Ascending aorta (tissue), 2 donors: ENCODE measurements at regions of chr18 and their contacts with region 1.

Region 1: DNA sequence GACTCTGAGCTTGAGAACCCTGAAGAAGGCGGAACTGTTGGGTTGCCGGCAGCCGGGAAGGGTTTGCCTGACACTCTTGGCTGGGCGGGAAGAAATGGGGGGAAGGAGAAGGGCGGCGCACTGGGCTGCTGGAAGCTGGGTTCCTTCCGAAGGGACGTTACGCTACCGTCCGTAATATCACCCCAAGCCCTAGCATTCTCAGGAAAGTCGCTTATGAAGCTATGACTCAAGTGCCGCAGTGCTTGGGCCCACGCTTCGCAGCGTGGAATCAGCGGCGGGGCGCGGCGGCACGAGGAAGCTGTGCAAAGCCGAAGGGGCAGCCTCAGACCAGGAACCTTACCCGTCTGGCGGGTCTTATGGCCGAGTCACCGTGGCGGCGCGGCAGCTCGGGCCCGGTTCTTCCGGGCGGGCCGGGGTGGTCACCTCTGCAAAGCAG is 50.2 kb upstream of the SIGLEC15 start:
- DNase-seq: peak in 1 of 2 donors; percentile 84
- H3K4me3 ChIP-seq: peak overlapping the region; percentile 66 to 69
- H3K27ac ChIP-seq: peak overlapping the region; percentile 77 to 84
- H3K4me1 ChIP-seq: peaks cover 0 to 10% of the 10 kb centered on the region in 2 donors
- H3K27me3 ChIP-seq: no peaks in the 10 kb centered on the region
- CTCF ChIP-seq: no peak

Region 2: GRCh38 chr18:45722899-45723298 is 52.4 kb before region 1 on chr18:
- intact Hi-C with region 1: loop called (anchors 2 kb)
- DNase-seq: peak; percentile 26 to 87
- H3K4me3 ChIP-seq: no peak overlapping the region
- H3K27ac ChIP-seq: no peak overlapping the region
- H3K4me1 ChIP-seq: peaks cover 3 to 4% of the 10 kb centered on the region in 2 donors
- H3K27me3 ChIP-seq: no peaks in the 10 kb centered on the region
- CTCF ChIP-seq: peak; percentile 45 to 76 (median 64)

Region 3: GRCh38 chr18:45738658-45739057 is 36.6 kb before region 1 on chr18:
- intact Hi-C with region 1: no loop called
- DNase-seq: no peak
- H3K4me3 ChIP-seq: no peak overlapping the region
- H3K27ac ChIP-seq: no peak overlapping the region
- H3K4me1 ChIP-seq: peaks cover 0 to 2% of the 10 kb centered on the region in 2 donors
- H3K27me3 ChIP-seq: no peaks in the 10 kb centered on the region
- CTCF ChIP-seq: no peak

Region 4: DNA sequence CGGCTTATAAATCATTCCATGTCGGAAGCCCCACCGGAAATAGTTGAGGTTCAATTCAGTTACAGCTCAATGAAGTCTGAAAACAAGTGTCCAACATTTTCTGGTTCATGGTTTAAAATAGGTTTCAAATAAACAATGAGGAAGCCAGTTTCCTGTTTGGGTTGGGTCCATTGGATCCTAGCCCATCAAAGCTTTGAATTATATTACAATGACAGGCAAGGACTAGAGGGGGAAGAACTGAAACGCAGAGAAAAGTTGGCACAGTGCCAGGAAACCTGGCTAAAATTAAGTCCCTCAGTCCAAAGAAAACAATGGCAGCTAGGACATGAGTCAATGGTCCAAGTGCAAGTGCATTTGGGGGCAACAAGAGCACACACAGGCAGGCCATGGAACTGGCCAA is 19.3 kb before region 1 on chr18:
- intact Hi-C with region 1: loop called (anchors 1 kb)
- DNase-seq: peak; percentile 44 to 94
- H3K4me3 ChIP-seq: no peak overlapping the region
- H3K27ac ChIP-seq: peak overlapping the region; percentile 71 to 73
- H3K4me1 ChIP-seq: peaks cover 13 to 27% of the 10 kb centered on the region in 2 donors
- H3K27me3 ChIP-seq: no peaks in the 10 kb centered on the region
- CTCF ChIP-seq: no peak

Region 5: DNA sequence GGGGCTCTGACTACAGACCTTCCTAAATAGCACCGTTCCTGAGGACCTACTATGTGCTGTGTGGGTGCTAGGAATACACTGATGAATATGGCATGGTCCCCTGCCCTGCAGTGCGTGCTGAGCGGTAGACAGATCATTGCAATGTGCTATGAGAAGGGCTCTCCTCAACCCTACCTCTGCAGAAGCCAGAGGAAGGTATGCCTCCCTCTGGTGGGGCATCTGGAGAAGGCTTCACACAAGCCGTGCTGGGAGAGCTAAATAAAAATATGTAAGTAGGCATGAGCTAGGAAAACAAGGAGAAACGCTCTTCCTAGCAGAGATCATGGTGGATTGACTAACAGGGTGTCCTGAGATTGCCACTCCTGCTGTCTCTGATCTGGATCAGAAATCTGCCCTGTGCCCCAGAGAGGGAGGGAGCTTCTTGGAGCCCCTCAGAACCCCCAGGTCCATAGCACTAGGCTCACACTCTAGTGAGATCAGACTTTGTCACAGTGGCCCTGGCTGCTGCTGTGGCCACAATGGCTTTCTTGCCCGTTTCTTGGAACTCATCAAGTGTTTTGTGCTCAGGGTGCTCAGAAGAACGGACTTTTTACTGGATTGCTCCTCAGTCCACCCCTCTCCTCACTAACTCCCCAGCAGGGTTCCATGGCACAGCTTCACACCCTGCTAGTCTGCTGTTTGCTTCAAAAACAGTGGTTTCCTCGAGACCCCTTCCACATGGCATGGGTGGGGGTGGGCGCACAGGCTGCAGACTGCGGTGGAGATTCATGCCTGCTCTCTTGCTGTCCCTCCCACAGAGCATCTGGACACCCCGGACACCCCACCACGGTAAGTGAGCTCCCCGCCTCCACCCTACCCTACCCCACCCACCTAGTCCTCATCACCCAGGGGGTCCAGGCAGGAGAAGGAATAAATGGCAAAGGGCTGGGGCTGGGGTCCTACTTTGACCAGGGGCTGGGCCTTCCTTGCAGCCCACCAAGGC is 64.4 kb after region 1 on chr18:
- intact Hi-C with region 1: loop called (anchors 2 kb)
- DNase-seq: no peak
- H3K4me3 ChIP-seq: no peak overlapping the region
- H3K27ac ChIP-seq: no peak overlapping the region
- H3K4me1 ChIP-seq: peaks cover 2 to 14% of the 10 kb centered on the region in 2 donors
- H3K27me3 ChIP-seq: no peaks in the 10 kb centered on the region
- CTCF ChIP-seq: peak; percentile 53 to 72 (median 59)

Region 6: GRCh38 chr18:45850021-45850420 is 74.8 kb after region 1 on chr18:
- intact Hi-C with region 1: no loop called
- DNase-seq: no peak
- H3K4me3 ChIP-seq: no peak overlapping the region
- H3K27ac ChIP-seq: no peak overlapping the region
- H3K4me1 ChIP-seq: no peaks in the 10 kb centered on the region
- H3K27me3 ChIP-seq: no peaks in the 10 kb centered on the region
- CTCF ChIP-seq: peak in 2 of 3 experiments; percentile 14 to 18